Activated naive CD4-positive, alpha-beta T cell treated with anti-CD3 and anti-CD28 coated beads, Interleukin-2, amount 10 ng/mL, durations not matched to agents 7 days and 5 days (primary cell): ENCODE measurements at regions of chr2 and their contacts with region 1.

Region 1: GRCh38 chr2:68751397-68752339 is 17.1 kb downstream of the ARHGAP25 start:
- DNase-seq: peak; percentile 95
- H3K4me3 Mint-ChIP-seq: no peak overlapping the region
- H3K27ac Mint-ChIP-seq: peak overlapping the region; percentile 74
- H3K4me1 Mint-ChIP-seq: peaks cover 92% of the 10 kb centered on the region
- H3K27me3 Mint-ChIP-seq: no peaks in the 10 kb centered on the region

Region 2: DNA sequence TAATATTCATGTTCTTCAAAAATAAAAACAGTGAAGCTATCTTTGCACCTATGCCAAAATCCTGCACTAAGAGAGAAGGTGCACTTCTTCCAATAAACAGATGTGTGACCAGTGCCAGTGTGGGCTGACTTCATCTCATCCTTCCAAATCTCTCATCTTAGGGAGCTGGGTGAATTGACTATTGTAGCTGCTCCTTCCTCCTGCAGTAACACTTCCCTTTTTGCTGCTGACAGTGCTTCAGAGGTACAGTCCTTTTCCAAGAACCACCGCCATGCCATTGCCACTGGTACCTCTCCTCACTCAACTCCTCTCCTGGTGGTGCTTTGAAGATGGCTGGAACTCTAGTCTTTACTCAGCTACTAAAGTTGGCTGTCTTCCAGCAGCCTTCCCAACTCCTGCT is 59.2 kb before region 1 on chr2:
- CTCF ChIA-PET with region 1: no interaction called
- DNase-seq: no peak
- H3K4me3 Mint-ChIP-seq: no peak overlapping the region
- H3K27ac Mint-ChIP-seq: no peak overlapping the region
- H3K4me1 Mint-ChIP-seq: peaks cover 18% of the 10 kb centered on the region
- H3K27me3 Mint-ChIP-seq: peaks cover 21% of the 10 kb centered on the region

Region 3: DNA sequence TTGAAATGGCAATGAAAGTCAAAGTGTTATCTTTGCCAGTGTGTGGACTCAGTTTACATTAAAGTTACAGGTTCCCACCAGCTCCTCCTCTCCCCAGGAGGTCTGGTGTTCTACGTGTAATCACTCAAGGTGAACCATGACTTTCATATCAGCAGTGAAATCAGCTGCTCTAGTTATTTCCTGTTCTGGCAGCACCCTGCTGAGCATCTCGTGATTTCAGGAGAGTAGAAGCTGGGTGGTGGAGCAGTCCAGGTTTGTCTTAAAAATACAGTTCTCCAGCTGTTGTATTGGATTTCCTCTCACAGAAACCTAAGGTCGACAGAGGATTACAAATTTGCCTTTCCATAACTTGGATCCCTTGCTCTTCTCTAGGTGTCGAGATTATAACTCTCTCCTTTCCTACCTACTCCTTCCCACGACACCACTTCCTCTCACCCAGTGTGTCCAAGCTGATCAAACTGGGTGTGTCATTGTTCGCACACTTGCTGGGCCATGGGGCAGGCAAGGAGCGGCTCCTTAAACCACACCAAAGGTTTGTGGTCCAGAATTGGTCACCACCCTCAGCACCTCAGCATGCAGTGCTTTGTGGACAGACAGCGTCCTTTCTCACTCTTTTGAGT is 30.1 kb before region 1 on chr2:
- CTCF ChIA-PET with region 1: interaction called, 16 read pairs
- DNase-seq: peak; percentile 67
- H3K4me3 Mint-ChIP-seq: peak overlapping the region; percentile 50
- H3K27ac Mint-ChIP-seq: peak overlapping the region; percentile 95
- H3K4me1 Mint-ChIP-seq: peaks cover 99% of the 10 kb centered on the region
- H3K27me3 Mint-ChIP-seq: no peaks in the 10 kb centered on the region

Region 4: GRCh38 chr2:68766376-68766845 is 14.7 kb after region 1 on chr2:
- CTCF ChIA-PET with region 1: interaction called, 55 read pairs
- DNase-seq: peak; percentile 78
- H3K4me3 Mint-ChIP-seq: peak overlapping the region; percentile 71
- H3K27ac Mint-ChIP-seq: peak overlapping the region; percentile 99
- H3K4me1 Mint-ChIP-seq: peaks cover 98% of the 10 kb centered on the region
- H3K27me3 Mint-ChIP-seq: no peaks in the 10 kb centered on the region

Region 5: DNA sequence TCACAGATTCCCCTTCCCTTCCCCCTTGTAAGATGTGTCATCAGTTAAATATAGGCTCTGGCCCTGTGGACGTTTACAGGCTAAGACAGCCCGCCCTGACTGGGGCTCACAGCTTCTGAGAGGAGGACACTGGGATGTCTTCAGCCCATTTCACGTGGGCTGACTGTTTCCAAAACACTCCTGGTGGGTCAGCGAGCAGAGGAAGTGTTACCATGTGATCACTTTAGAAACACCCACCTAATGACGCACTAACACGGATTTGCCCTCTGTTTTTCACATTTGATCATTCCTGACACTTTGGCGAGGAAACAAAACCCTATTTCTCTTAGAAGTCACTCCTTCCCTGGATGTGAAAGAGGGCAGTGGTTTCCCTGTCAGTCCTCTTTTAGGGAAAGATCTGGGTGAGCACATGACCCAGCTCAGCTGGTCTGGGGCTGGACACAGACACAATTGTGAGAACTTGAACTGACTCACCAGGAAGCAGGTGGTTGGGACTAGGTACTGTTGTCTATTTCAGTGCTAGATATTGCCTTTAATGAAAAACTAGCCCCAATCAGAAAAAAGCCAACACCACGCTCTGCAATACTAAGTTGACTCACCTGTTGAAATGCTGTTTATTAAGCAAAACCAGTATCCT is 80.7 kb after region 1 on chr2:
- CTCF ChIA-PET with region 1: interaction called, 49 read pairs
- DNase-seq: peak; percentile 42
- H3K4me3 Mint-ChIP-seq: peak overlapping the region; percentile 8
- H3K27ac Mint-ChIP-seq: peak overlapping the region; percentile 85
- H3K4me1 Mint-ChIP-seq: peaks cover 84% of the 10 kb centered on the region
- H3K27me3 Mint-ChIP-seq: no peaks in the 10 kb centered on the region